Right cardiac atrium (tissue), 5 donors: ENCODE measurements at regions of chr6 and their contacts with region 1.

Region 1: DNA sequence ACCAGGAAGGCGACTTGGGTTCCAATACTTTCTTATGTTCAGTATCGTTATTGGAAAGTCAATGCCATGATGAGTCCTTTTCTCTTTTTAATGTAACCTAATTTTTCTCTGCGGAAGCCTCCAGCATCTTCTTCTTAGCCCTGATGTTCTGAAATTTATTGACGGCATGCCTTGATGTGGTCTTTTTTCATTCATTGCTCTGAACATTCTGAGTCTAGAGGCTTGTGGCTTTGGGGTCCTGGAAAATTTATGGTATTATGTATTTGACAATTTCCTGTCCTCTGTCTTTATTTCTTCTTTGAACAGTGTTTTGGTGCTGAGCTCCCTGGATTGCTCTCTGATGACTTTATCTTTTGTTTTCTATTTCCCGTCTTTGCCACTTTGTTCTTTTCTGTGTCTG is 28.7 kb upstream of the MAS1 start:
- DNase-seq: no peak
- ATAC-seq: no peak
- H3K4me3 ChIP-seq: no peak overlapping the region
- H3K27ac ChIP-seq: no peak overlapping the region
- H3K4me1 ChIP-seq: no peaks in the 10 kb centered on the region
- H3K27me3 ChIP-seq: no peaks in the 10 kb centered on the region

Region 2: DNA sequence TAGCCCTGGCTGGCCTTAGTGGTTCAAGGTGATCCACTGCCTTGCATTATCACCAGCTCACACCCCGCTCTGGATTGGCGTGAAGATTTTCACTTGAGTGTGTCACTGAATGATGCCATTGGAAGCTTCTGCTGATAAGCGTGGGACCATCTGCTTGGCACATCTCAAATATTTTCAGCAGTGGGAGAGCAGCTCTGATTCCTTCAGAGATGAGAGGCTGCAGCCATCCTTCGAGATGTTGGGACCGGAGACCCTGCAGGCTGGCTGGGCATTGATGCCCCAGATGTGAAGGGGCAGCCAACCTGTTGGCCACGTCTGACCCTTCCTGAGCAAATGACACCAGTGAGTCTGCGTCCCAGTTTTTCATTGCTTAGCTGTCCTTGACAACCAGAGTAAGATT is 28.7 kb after region 1 on chr6 and contains the start of gene MAS1:
- intact Hi-C with region 1: no loop called
- DNase-seq: no peak
- ATAC-seq: no peak
- H3K4me3 ChIP-seq: no peak within 1 kb of the TSS
- H3K27ac ChIP-seq: no peak within 1 kb of the TSS
- H3K4me1 ChIP-seq: no peaks in the 10 kb centered on the region
- H3K27me3 ChIP-seq: no peaks in the 10 kb centered on the region
- total RNA-seq, gene MAS1: 0.03 to 0.06 TPM in 2 of 4 donors, not detected in the others

Region 3: GRCh38 chr6:159941286-159942113 is 79.4 kb after region 1 on chr6:
- intact Hi-C with region 1: loop called in 2 of 4 experiments (anchors 5 to 10 kb)
- DNase-seq: no peak
- ATAC-seq: peak; percentile 21 to 25
- H3K4me3 ChIP-seq: no peak overlapping the region
- H3K27ac ChIP-seq: no peak overlapping the region
- H3K4me1 ChIP-seq: peaks cover 5% of the 10 kb centered on the region
- H3K27me3 ChIP-seq: no peaks in the 10 kb centered on the region

Region 4: GRCh38 chr6:160030103-160030502 is 168.0 kb after region 1 on chr6:
- intact Hi-C with region 1: loop called in 1 of 4 experiments (anchors 10 kb)
- DNase-seq: peak; percentile 91 to 95 (median 93)
- ATAC-seq: peak; percentile 93 to 96
- H3K4me3 ChIP-seq: no peak overlapping the region
- H3K27ac ChIP-seq: peak overlapping the region; percentile 33
- H3K4me1 ChIP-seq: peaks cover 3% of the 10 kb centered on the region
- H3K27me3 ChIP-seq: no peaks in the 10 kb centered on the region

Region 5: DNA sequence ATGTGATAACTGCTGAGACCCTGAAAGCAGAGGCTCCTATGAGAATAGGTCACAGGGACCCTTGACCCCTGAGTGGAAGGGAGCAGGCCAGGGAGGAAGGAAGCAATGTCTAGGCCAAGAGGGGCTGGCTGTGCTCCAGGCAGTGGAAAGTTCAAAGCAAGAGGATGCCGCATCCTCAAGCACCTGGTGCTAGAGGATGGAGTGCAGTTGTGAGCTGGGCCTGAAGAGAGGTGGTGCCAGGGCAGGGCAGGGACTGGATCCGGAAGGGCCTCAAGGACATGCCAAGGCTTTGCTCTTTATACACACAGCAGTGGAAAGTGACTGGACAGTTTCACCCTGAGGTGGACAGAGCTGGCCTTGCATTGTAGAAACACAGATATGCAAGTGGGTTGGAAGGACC is 583.0 kb after region 1 on chr6:
- intact Hi-C with region 1: loop called in 1 of 4 experiments (anchors 5 kb)
- DNase-seq: no peak
- ATAC-seq: no peak
- H3K4me3 ChIP-seq: no peak overlapping the region
- H3K27ac ChIP-seq: no peak overlapping the region
- H3K4me1 ChIP-seq: no peaks in the 10 kb centered on the region
- H3K27me3 ChIP-seq: no peaks in the 10 kb centered on the region

Region 6: DNA sequence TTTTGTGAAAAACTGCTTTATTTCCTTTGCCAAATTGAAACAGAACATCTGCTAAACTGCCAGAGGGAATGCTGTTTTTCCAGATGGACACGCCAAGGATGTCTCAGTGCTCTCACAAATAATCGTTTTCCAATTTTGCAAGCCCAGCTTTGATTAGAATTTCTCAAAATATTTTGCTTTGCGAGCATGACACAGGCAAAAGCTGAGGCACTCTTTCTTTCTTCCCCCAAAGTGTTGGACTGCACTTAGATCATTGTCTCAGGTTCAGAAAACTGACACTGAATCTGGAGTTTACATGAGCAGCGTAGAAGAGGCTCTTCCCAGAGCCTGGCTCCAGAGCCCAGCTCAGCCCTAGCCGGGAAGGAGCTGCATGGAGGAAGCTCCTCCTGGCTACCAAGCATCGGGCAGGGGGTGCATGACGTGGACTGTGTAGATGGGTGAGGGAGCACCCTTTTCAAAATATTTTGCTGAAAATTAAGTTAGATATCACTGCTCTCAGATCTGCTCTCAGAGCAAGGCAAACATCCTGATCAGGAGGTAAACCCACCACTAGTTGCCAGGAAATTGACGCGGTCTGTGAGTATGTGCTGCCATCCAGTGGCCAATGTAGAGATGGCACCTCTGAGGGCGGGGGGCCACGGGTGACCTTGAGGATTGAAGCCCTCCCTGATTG is 593.6 kb after region 1 on chr6:
- intact Hi-C with region 1: loop called in 2 of 4 experiments (anchors 5 kb)
- DNase-seq: peak; percentile 40 to 82 (median 79)
- ATAC-seq: peak; percentile 85 to 87
- H3K4me3 ChIP-seq: no peak overlapping the region
- H3K27ac ChIP-seq: no peak overlapping the region
- H3K4me1 ChIP-seq: no peaks in the 10 kb centered on the region
- H3K27me3 ChIP-seq: no peaks in the 10 kb centered on the region

Region 7: DNA sequence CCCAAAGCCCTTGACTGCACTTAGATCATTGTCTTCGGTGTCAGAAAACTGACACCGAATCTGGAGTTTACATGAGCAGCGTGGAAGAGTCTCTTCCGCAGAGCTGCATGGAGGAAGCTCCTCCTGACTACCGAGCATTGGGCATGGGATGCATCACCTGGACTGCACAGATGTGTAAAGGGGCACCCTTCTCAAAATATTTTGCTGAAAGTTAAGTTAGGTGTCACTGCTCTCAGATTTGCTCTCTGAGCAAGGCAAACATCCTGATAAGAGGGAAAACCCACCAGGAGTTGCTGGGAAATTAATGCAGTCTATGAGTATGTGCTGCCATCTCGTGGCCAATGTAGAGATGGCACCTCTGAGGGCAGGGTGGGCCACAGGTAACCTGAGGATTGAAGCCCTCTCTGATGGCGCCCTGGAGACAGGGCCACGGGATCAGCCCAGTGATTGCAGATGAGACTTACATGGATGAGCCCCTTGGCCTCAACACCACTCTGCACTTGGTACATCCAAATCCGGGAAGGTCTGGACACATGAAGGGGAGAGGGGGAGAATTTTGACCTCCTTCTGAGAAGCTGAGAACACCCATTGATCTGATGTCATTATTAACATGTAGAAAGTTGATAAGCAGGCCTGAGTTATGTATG is 672.1 kb after region 1 on chr6:
- intact Hi-C with region 1: loop called in 1 of 4 experiments (anchors 10 kb)
- DNase-seq: peak; percentile 37 to 74 (median 68)
- ATAC-seq: peak; percentile 71 to 72
- H3K4me3 ChIP-seq: no peak overlapping the region
- H3K27ac ChIP-seq: no peak overlapping the region
- H3K4me1 ChIP-seq: no peaks in the 10 kb centered on the region
- H3K27me3 ChIP-seq: no peaks in the 10 kb centered on the region